GM23248 (cell line): ENCODE measurements at regions of chr15 and their contacts with region 1.

Region 1: GRCh38 chr15:88440021-88440420 is 27.2 kb downstream of the MRPL46 start:
- DNase-seq: peak; percentile 76
- H3K4me3 ChIP-seq: no peak overlapping the region
- H3K27ac ChIP-seq: no peak overlapping the region
- H3K4me1 ChIP-seq: no peaks in the 10 kb centered on the region
- H3K27me3 ChIP-seq: no peaks in the 10 kb centered on the region; the same call in 1 of the 2 replicates

Region 2: GRCh38 chr15:88274553-88275460 is 165.2 kb before region 1 on chr15:
- in situ Hi-C with region 1: loop called (anchors 25 kb)
- DNase-seq: peak; percentile 67
- H3K4me3 ChIP-seq: no peak overlapping the region
- H3K27ac ChIP-seq: no peak overlapping the region
- H3K4me1 ChIP-seq: no peaks in the 10 kb centered on the region
- H3K27me3 ChIP-seq: peaks cover 5% of the 10 kb centered on the region